OCI-LY7 (cell line): ENCODE measurements at regions of chr1 and their contacts with region 1.

Region 1: DNA sequence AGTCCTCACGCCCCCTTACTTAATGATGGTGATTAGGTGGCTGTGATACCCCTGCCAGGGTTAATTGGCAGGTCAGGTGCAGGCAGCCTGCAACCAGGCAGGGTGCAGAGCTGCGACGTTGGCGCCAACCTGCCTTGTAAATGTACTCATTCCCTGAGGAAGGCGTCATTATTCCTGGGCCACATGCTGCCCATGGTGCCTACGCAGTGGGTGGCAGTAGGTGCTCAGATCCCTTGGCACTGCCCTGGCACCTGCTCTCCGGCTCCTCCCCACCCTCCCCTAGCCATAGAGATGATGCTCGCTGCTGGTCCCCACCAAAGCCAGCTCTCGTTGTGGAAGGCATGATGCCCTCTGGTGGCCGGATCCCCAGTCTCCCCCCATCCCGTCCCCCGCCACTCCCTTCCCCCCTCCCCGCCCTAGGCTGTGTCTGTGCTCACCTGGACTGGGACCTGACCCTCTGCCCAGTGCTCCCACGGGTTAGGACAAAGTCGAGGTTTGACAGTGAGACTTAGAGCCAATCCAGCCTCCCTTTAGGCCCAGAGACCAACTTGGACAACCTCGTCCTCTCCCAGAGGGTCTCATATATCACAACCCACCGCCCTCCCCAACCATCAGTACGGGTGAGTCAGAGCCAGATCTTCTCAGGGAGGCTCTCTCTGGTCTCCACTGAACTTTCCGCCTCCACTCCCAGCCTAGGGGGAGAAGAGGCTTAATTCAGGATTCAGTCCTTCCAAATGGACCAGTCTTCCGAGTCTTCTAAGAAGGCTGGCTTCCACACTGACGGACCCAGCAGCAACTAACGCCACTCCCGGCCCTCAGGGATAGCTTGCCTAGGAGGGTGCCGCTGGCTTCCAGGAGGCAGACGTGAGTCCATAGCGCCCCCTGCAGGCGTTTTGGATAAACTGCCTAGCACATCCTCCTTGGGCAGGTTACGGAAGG is 5.7 kb downstream of the KRTCAP2 start:
- DNase-seq: peak; percentile 91
- H3K4me3 ChIP-seq: peak overlapping the region; percentile 59
- H3K27ac ChIP-seq: no peak overlapping the region
- H3K4me1 ChIP-seq: peaks cover 23% of the 10 kb centered on the region
- CTCF ChIP-seq: peak; percentile 95

Region 2: DNA sequence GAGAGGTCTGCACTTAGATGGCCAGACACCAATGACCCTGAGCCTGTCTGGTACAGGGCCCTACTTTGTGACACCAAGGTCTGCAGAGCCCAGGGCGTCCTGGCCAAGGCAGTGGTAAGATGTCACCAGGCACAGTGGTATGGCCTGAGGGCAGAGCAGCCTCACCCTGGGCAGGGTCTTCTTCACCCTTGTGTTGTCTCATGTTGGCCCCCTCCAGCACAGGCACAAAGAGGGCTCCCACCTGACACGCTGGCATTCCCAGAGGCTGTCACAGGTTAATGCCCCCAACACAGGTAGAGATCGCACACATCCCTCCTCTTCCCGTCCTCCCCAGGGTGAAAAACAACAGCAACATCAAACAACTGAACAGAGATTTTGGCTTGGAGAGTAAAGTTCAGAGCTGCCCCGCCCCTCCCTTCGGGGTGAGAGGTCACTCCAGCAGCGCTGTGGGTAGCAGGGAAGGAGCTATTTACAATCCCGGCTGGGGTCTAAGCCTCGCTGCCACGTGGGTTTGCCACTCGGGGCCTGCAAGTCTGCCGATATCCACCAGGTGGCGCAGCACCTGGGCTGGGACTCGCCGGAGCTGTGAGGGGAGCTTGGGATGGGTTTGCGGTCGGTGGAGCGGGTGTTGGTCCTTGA is 76.2 kb before region 1 on chr1:
- CTCF ChIA-PET with region 1: interaction called, 12 read pairs
- POLR2A ChIA-PET with region 1: interaction called, 6 read pairs
- intact Hi-C with region 1: loop called (anchors 1 kb)
- DNase-seq: peak; percentile 80
- H3K4me3 ChIP-seq: no peak overlapping the region
- H3K27ac ChIP-seq: no peak overlapping the region
- H3K4me1 ChIP-seq: peaks cover 15% of the 10 kb centered on the region
- CTCF ChIP-seq: peak; percentile 97